ENCODE measurements at regions of chr16 and their contacts with region 1.

Region 1: GRCh38 chr16:69796351-69797118 is 34.4 kb downstream of the WWP2 start:
- DNase-seq: peak; percentile 36
- ATAC-seq: peak; percentile 93
- H3K4me3 ChIP-seq: no peak overlapping the region
- H3K27ac ChIP-seq: no peak overlapping the region
- H3K4me1 ChIP-seq: no peaks in the 10 kb centered on the region
- H3K27me3 ChIP-seq: no peaks in the 10 kb centered on the region
- CTCF ChIP-seq: peak; percentile 93

Region 2: DNA sequence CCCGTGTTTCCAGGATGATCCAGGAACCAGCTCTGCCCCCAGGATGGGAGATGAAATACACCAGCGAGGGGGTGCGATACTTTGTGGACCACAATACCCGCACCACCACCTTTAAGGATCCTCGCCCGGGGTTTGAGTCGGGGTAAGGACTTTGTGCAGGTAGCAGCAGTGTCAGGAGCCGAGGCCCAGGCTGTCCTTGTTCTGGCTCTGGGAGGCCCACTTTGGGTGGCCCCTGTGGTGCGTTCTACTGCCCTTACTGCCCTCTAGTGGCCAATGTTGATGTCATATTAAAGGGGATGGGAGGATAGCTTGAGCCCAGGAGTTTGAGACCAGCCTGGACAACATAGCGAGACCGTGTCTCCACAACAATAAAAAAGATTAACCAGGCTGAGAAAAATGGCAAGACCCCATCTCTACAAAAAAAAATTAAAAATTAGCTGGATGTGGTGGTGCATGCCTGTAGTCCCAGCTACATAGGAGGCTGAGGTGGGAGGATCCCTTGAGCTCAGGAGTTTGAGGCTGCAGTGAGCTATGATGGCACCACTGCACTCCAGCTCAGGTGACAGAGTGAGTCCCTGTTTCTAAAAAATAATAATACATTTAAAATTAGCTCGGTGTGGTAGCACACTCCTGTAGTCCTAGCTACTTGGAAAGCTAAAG is 133.7 kb after region 1 on chr16:
- intact Hi-C with region 1: loop called (anchors 10 kb)
- DNase-seq: no peak
- ATAC-seq: peak; percentile 83
- H3K4me3 ChIP-seq: no peak overlapping the region
- H3K27ac ChIP-seq: no peak overlapping the region
- H3K4me1 ChIP-seq: no peaks in the 10 kb centered on the region
- H3K27me3 ChIP-seq: no peaks in the 10 kb centered on the region
- CTCF ChIP-seq: peak; percentile 74